GM18951 (cell line): ENCODE measurements at regions of chr16 and their contacts with region 1.

Region 1: GRCh38 chr16:13919683-13920509 is at the start of gene ERCC4:
- POLR2A ChIP-seq: peak; percentile 91

Region 2: GRCh38 chr16:14249291-14250032 is 329.6 kb after region 1 on chr16:
- in situ Hi-C with region 1: loop called (anchors 10 kb)
- POLR2A ChIP-seq: no peak